Heart left ventricle (tissue), 16 donors: ENCODE measurements at regions of chr18 and their contacts with region 1.

Region 1: DNA sequence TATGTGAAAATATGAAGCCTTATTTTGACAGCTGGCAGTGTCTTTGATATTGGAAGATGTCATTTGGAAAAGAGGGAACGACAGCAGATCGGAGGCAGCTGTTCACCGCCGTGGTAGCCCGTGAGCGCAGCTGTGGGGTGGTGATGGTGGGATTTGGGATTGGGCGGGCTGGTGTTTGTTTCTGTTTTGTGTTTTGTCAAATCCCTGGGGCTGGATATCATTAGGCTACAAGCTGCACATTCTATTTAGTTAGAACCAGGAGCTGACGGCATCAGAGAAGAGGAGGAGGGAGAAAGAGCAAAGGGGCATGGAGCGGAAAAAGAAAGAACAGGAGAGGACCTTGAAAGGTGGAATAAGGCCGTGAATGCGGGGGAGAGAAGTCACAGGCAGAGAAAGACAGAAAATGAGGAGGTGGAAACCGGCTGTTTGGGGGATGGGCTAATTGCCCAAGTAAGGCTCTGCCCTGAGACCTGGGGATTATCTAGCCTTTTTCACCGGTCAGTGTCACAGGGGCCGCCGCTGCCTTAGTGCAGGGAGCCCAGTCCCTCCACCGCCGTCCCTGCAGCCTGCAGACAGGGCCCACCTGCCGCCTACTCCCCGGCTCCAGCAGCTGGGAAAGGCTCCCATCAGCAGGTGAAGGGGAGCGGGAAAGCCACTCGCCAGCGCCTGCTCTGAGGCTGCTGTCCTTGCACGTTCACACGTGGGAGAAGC is 88.0 kb downstream of the ZCCHC2 start:
- DNase-seq: peak in 2 of 5 donors; percentile 48 to 53
- ATAC-seq: peak; percentile 17 to 60 (median 42)
- H3K4me3 ChIP-seq: peak overlapping the region in 11 of 12 donors; percentile 11 to 56 (median 39)
- H3K27ac ChIP-seq: peak overlapping the region in 10 of 12 donors; percentile 31 to 84 (median 62)
- H3K4me1 ChIP-seq: peaks cover 2 to 29% (median 19%) of the 10 kb centered on the region in 12 donors
- H3K27me3 ChIP-seq: peaks cover 0 to 4% (median 0%) of the 10 kb centered on the region in 9 donors
- CTCF ChIP-seq: no peak
- POLR2A ChIP-seq: no peak

Region 2: GRCh38 chr18:62672600-62672999 is 61.7 kb after region 1 on chr18:
- intact Hi-C with region 1: loop called in 1 of 10 experiments (anchors 5 kb)
- DNase-seq: no peak
- ATAC-seq: no peak
- H3K4me3 ChIP-seq: no peak overlapping the region
- H3K27ac ChIP-seq: no peak overlapping the region
- H3K4me1 ChIP-seq: no peaks in the 10 kb centered on the region
- H3K27me3 ChIP-seq: no peaks in the 10 kb centered on the region
- CTCF ChIP-seq: no peak
- POLR2A ChIP-seq: no peak

Region 3: DNA sequence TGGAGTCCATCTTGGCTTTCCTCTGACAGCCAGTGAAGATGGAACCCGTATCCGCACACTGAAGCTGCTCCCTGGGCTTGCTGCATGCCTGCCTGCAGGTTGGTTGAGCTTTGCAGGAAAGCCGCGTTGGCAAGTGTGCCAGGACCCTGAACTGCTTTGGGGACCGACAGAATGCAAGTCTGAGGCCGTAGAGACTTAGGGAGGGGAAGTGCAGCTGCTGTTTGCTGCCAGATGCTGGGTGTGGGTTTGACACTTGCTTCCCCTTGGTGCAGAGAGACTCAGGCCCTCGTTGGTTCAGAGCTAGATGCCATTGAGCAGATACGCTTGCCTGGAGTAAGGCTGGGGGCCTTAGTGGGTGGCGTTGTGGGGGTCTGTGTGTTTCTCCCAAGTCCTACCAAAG is 91.4 kb after region 1 on chr18:
- intact Hi-C with region 1: loop called in 1 of 10 experiments (anchors 10 kb)
- DNase-seq: no peak
- ATAC-seq: no peak
- H3K4me3 ChIP-seq: no peak overlapping the region
- H3K27ac ChIP-seq: no peak overlapping the region
- H3K4me1 ChIP-seq: no peaks in the 10 kb centered on the region
- H3K27me3 ChIP-seq: no peaks in the 10 kb centered on the region
- CTCF ChIP-seq: no peak
- POLR2A ChIP-seq: no peak